Caco-2 (cell line): ENCODE measurements at regions of chr1 and their contacts with region 1.

Region 1: GRCh38 chr1:93964777-93965200 is 55.6 kb upstream of the GCLM start:
- DNase-seq: no peak
- H3K4me3 ChIP-seq: no peak overlapping the region
- H3K4me3 Mint-ChIP-seq: no peak overlapping the region
- H3K27ac Mint-ChIP-seq: no peak overlapping the region
- H3K4me1 ChIP-seq: no peaks in the 10 kb centered on the region
- H3K4me1 Mint-ChIP-seq: no peaks in the 10 kb centered on the region
- H3K27me3 ChIP-seq: no peaks in the 10 kb centered on the region
- H3K27me3 Mint-ChIP-seq: no peaks in the 10 kb centered on the region
- CTCF ChIP-seq: no peak

Region 2: GRCh38 chr1:93980320-93981273 is 15.8 kb after region 1 on chr1:
- CTCF ChIA-PET with region 1: no interaction called
- POLR2A ChIA-PET with region 1: no interaction called
- intact Hi-C with region 1: no loop called
- DNase-seq: peak in 1 of 2 experiments; percentile 17
- H3K4me3 ChIP-seq: no peak overlapping the region
- H3K4me3 Mint-ChIP-seq: no peak overlapping the region
- H3K27ac Mint-ChIP-seq: no peak overlapping the region
- H3K4me1 ChIP-seq: no peaks in the 10 kb centered on the region
- H3K4me1 Mint-ChIP-seq: no peaks in the 10 kb centered on the region
- H3K27me3 ChIP-seq: no peaks in the 10 kb centered on the region
- H3K27me3 Mint-ChIP-seq: no peaks in the 10 kb centered on the region
- CTCF ChIP-seq: peak; percentile 26 to 33

Region 3: GRCh38 chr1:94004924-94005323 is 40.1 kb after region 1 on chr1:
- CTCF ChIA-PET with region 1: no interaction called
- POLR2A ChIA-PET with region 1: no interaction called
- intact Hi-C with region 1: loop called (anchors 1 kb)
- DNase-seq: no peak
- H3K4me3 ChIP-seq: no peak overlapping the region
- H3K4me3 Mint-ChIP-seq: no peak overlapping the region
- H3K27ac Mint-ChIP-seq: no peak overlapping the region
- H3K4me1 ChIP-seq: no peaks in the 10 kb centered on the region
- H3K4me1 Mint-ChIP-seq: no peaks in the 10 kb centered on the region
- H3K27me3 ChIP-seq: no peaks in the 10 kb centered on the region
- H3K27me3 Mint-ChIP-seq: no peaks in the 10 kb centered on the region
- CTCF ChIP-seq: no peak